MCF 10A (cell line): ENCODE measurements at regions of chr1 and their contacts with region 1.

Region 1: DNA sequence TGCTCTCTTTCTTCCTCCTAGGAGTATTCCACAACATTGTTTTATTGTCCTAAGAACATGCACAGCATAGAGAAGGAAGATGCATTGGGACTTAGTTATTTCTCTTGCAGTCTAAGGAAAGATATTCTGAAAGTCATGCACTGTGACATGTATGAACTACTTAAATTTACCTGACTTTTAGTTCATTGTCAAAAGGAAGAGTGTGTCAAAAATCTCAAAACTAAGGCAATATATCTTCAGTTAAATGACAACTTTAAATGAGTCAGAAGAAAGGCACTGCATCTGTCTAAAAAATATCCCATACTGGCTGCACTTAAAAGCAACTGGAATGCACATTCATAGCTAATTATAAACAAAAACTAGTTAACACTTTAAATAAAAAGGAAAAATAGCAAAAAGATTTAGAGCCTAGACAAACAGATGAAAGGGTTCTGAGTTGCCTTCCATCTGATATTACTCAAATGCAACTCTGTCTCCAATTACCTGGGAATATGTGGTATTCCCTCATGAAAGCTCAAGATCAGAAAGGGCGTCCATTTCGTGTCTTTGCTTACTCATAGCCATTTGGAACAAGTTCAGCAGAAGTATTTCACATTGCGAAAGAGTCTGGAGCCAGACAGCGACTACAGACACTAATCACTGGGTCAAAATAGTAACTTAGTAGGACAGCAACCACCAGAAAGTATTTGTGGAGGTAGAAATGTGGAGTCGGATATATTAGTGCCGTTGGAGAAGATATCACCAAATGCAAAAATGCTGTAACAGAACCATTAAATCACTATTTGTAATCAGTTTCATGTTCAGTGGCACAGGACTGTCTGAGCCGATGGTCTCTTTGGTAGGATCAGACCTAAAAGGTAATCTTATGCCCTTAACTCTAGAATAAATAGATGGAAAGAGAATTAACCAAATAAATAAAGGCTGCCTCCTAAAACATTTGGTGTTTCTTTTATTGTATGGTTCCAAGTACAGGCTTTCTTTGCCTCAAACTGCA is 225.7 kb downstream of the GREM2 start:
- DNase-seq: peak; percentile 99
- H3K4me3 Mint-ChIP-seq: peak overlapping the region; percentile 5
- H3K27ac Mint-ChIP-seq: peak overlapping the region; percentile 85
- H3K4me1 Mint-ChIP-seq: peaks cover 31% of the 10 kb centered on the region
- H3K27me3 Mint-ChIP-seq: no peaks in the 10 kb centered on the region
- CTCF ChIP-seq: no peak

Region 2: DNA sequence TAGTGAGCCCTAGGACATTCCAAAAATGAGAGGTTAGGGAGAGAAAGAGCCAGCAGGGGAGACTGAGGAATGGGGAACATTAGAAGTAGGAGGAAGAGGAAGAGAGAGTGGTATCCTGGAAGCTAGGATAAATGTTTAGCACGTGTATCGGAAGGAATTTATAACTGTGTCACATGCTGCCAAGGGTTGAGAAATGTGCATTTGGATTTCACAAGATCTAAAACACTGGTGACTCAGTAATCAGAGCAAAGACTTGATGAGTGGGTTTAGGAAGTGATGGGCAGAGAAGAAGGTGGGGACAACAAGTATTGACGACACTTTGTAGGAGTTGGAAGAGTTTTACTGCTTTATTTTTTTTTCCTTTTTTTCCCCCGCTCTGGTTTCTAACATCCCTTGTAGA is 100.7 kb before region 1 on chr1:
- CTCF ChIA-PET with region 1: interaction called, 3 read pairs
- POLR2A ChIA-PET with region 1: interaction called, 4 read pairs
- intact Hi-C with region 1: loop called (anchors 5 kb)
- DNase-seq: peak; percentile 96
- H3K4me3 Mint-ChIP-seq: peak overlapping the region; percentile 1
- H3K27ac Mint-ChIP-seq: peak overlapping the region; percentile 88
- H3K4me1 Mint-ChIP-seq: peaks cover 22% of the 10 kb centered on the region
- H3K27me3 Mint-ChIP-seq: no peaks in the 10 kb centered on the region
- CTCF ChIP-seq: no peak

Region 3: DNA sequence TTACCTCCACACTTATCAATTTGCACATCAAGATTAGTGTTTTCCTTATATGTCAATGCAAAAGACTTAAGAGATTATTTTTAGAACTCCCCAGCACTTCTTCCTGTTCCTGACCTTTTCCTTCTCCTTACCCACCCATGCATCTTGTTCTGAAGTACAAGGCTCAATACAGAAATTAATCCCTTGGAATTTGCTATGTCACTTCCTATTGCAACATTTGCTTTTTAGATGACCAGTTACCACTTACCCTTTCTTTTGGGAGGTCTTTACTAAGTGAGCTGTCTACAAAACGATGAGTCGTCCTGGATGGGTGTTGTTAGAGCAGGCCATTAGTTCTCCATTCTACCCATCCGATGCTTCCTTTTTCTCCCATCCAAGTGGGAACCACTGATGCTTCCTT is 73.4 kb before region 1 on chr1:
- CTCF ChIA-PET with region 1: no interaction called
- POLR2A ChIA-PET with region 1: no interaction called
- intact Hi-C with region 1: loop called (anchors 5 kb)
- DNase-seq: peak; percentile 97
- H3K4me3 Mint-ChIP-seq: no peak overlapping the region
- H3K27ac Mint-ChIP-seq: peak overlapping the region; percentile 40
- H3K4me1 Mint-ChIP-seq: peaks cover 34% of the 10 kb centered on the region
- H3K27me3 Mint-ChIP-seq: no peaks in the 10 kb centered on the region
- CTCF ChIP-seq: no peak

Region 4: DNA sequence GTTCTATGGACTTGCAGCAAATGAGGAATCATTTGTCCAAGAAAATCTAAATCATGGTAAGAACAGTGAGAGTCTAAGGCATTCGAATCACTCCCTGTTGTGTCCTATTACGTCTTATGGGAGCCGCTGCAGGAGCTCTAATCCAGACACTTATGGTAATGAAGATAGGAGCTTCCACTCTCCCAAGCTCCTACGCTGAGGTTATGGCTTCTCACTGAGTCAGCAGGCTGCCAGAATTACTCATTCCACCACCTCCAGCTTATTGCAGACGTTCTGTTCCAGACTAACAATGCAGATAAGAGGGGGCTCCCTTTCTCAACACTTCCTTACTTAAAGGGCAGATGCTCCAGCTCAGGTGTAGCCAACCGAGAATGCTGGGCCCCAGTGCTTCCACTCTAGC is 13.1 kb after region 1 on chr1:
- CTCF ChIA-PET with region 1: interaction called, 8 read pairs
- POLR2A ChIA-PET with region 1: interaction called, 29 read pairs
- intact Hi-C with region 1: no loop called
- DNase-seq: peak; percentile 94
- H3K4me3 Mint-ChIP-seq: no peak overlapping the region
- H3K27ac Mint-ChIP-seq: peak overlapping the region; percentile 83
- H3K4me1 Mint-ChIP-seq: peaks cover 27% of the 10 kb centered on the region
- H3K27me3 Mint-ChIP-seq: no peaks in the 10 kb centered on the region
- CTCF ChIP-seq: no peak

Region 5: DNA sequence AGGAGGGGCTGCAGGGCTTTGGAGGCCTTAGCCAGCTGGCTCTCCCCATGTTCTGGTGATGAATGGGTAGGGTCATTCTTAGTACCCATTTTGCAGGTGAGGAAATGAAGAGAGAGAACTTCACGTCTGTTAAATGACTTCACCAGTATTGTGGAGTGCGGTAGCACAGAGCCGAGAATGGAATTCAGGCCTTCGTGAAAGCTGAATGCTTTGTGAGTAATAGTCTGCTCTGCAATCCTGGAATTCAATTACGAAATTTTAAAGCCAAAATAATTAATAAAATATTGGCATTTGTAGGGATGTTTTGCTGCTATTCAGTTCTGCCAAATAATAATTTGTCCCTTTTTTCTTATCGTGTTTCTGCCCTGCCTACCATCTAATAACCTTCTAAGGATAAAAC is 28.0 kb after region 1 on chr1:
- CTCF ChIA-PET with region 1: no interaction called
- POLR2A ChIA-PET with region 1: interaction called, 21 read pairs
- intact Hi-C with region 1: loop called (anchors 1 kb)
- DNase-seq: peak; percentile 79
- H3K4me3 Mint-ChIP-seq: no peak overlapping the region
- H3K27ac Mint-ChIP-seq: peak overlapping the region; percentile 72
- H3K4me1 Mint-ChIP-seq: peaks cover 38% of the 10 kb centered on the region
- H3K27me3 Mint-ChIP-seq: no peaks in the 10 kb centered on the region
- CTCF ChIP-seq: no peak